ENCODE measurements at regions of chr3 and their contacts with region 1.

Region 1: GRCh38 chr3:108589146-108589997 is at the starts of genes CIP2A and DZIP3:
- DNase-seq: peak; percentile 86
- H3K4me3 Mint-ChIP-seq: peak within 1 kb of the TSS; percentile 98
- H3K27ac Mint-ChIP-seq: peak within 1 kb of the TSS; percentile 96
- H3K4me1 Mint-ChIP-seq: peaks cover 52% of the 10 kb centered on the region
- H3K27me3 Mint-ChIP-seq: no peaks in the 10 kb centered on the region
- total RNA-seq, gene CIP2A: 46.8 to 47.6 TPM
- total RNA-seq, gene DZIP3: 16.1 to 17.2 TPM

Region 2: DNA sequence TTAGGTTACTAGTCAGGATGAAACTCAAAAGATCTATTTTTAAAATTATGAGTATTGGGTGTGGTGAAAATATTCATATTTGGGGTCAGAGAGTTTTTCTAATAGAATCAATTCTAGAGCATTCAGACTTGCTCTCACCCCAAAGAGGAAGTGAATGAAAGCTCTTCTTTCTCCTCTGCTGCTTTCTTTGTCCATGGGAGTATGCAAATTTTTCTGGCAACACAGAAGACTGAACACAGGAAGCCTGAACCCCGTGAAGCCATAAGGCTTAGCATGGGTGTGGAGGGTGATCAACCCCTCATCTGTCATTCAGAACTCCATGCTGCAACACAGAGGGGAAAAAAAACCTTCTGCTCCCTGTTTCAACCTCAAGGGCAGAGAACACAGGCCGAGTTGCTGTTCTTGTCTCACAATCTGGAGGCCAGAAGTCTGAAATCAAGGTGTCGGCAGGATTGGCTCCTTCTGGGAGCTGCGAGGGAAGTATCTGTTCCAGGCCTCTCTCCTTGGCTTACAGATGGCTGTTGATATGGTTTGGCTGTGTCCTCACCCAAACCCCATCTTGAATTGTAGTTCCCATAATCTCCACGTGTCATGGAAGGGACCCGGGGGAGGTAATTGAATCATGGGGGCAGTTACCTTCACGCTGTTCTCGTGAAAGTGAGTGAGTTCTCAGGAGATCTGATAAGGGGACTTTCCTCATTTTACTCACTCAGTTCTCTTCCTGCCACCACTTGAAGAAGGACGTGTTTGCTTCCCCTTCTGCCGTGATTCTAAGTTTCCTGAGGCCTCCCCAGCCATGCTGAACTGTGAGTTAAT is 464.8 kb before region 1 on chr3:
- CTCF ChIA-PET with region 1: no interaction called
- POLR2A ChIA-PET with region 1: interaction called, 22 read pairs
- DNase-seq: peak; percentile 71
- H3K4me3 Mint-ChIP-seq: peak overlapping the region; percentile 84
- H3K27ac Mint-ChIP-seq: peak overlapping the region; percentile 99
- H3K4me1 Mint-ChIP-seq: peaks cover 61% of the 10 kb centered on the region
- H3K27me3 Mint-ChIP-seq: no peaks in the 10 kb centered on the region

Region 3: GRCh38 chr3:108578064-108578463 is 11.3 kb before region 1 on chr3:
- CTCF ChIA-PET with region 1: interaction called, 4 read pairs
- POLR2A ChIA-PET with region 1: interaction called, 17 read pairs
- DNase-seq: no peak
- H3K4me3 Mint-ChIP-seq: no peak overlapping the region
- H3K27ac Mint-ChIP-seq: no peak overlapping the region
- H3K4me1 Mint-ChIP-seq: peaks cover 15% of the 10 kb centered on the region
- H3K27me3 Mint-ChIP-seq: no peaks in the 10 kb centered on the region

Region 4: DNA sequence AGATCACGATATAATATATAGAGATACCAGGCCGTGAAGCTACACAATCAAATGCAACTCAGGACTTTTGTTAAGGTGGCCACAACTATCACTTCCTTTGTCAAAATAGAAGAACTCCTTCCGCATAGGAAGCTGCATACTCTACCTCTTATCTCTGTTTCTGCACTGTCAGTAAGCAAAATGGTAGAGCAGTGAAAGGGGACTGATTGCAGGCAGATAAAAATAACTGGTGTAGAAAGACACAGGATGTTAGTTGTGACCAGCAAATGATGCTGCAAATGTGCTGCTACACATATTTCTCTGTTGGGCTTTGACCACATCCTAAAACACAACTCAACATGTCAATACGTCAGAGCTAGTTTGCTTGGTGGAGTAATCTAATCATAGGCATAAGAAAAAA is 216.9 kb after region 1 on chr3:
- CTCF ChIA-PET with region 1: interaction called, 3 read pairs
- POLR2A ChIA-PET with region 1: interaction called, 15 read pairs
- DNase-seq: peak; percentile 59
- H3K4me3 Mint-ChIP-seq: peak overlapping the region; percentile 12
- H3K27ac Mint-ChIP-seq: peak overlapping the region; percentile 92
- H3K4me1 Mint-ChIP-seq: peaks cover 36% of the 10 kb centered on the region
- H3K27me3 Mint-ChIP-seq: no peaks in the 10 kb centered on the region

Region 5: DNA sequence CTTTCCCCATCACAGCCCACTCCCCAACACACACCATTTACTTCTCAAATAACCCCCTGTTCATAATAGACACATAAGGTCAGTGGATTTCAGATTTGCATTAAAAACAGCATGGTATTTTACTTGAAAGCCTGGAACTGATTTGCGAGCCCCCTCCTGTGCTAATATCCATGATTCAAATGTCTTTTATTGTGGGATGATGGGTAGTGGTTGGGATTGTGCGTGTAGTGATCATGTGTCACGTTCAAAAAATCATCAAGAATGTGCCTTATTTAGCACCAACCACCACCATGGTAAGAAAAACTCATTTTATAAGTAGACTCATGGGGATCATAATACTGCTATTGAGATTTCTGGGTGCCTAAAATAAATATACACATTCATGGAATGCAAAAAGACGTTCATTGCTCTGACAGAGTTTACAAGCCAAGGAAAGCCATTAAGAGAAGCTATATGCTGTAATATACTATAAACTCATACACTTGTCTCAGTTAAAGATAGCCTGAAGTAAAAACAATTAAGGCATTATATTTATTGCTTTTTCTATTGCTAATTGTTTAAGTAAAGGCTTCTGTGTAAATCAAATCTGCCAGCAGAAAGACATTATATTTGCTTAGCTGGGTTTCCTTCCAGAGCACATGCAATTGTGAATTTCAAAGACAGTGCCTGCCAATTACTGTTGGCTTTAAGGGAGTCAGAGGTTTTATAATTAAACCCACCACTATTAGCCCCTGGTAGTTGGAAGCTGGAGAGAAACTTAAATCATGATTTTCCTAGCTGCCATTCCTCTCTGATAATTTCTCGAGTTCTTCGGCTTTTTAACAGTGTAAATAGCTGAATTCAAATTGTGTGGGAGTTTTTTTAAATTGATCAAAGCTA is 237.2 kb after region 1 on chr3:
- CTCF ChIA-PET with region 1: interaction called, 7 read pairs
- POLR2A ChIA-PET with region 1: interaction called, 92 read pairs
- DNase-seq: no peak
- H3K4me3 Mint-ChIP-seq: peak overlapping the region; percentile 82
- H3K27ac Mint-ChIP-seq: peak overlapping the region; percentile 90
- H3K4me1 Mint-ChIP-seq: peaks cover 48% of the 10 kb centered on the region
- H3K27me3 Mint-ChIP-seq: no peaks in the 10 kb centered on the region

Region 6: DNA sequence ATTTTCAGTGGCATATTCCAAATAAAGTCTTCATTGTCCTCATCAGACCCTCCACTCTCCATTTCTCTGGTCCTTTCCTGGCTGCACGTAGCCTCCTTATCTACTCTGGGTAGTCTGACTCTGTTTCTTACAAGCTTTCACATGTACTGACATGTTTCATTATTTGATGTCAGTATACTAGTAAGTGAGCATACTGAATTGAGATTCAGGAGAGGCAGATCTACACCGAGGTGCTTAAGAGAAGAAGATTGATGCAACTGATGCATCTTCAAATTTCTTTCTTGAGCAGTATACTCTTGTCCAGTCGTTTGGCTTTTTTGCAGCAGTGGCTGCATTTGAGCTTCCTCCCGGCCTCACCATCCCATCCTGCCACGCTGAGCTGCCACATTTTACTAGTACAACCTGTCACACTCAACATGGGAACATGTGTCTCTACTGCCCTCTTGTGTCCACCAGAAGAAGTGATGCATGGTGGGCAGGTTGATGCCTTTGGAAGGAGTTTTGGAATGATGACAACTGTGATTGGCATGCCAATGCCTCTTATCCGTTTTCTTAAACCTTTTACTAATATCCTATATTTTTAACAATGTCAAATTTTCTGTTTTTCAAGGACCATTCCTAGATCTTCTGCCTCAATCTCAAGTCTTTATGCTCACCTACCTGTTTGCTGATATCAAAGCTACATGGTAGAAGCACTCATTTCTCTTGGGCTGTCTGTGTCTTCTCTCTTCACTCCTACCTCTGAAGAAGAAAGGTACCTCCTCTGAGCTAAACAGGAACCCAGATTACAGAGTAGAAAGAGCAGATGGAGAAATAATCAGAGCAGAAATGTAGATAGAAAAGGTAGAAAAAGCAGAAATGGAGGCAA is 325.6 kb after region 1 on chr3:
- CTCF ChIA-PET with region 1: interaction called, 15 read pairs
- POLR2A ChIA-PET with region 1: interaction called, 10 read pairs
- DNase-seq: peak; percentile 72
- H3K4me3 Mint-ChIP-seq: peak overlapping the region; percentile 19
- H3K27ac Mint-ChIP-seq: peak overlapping the region; percentile 40
- H3K4me1 Mint-ChIP-seq: peaks cover 14% of the 10 kb centered on the region
- H3K27me3 Mint-ChIP-seq: peaks cover 17% of the 10 kb centered on the region